SK-N-SH (cell line): ENCODE measurements at regions of chr11 and their contacts with region 1.

Region 1: DNA sequence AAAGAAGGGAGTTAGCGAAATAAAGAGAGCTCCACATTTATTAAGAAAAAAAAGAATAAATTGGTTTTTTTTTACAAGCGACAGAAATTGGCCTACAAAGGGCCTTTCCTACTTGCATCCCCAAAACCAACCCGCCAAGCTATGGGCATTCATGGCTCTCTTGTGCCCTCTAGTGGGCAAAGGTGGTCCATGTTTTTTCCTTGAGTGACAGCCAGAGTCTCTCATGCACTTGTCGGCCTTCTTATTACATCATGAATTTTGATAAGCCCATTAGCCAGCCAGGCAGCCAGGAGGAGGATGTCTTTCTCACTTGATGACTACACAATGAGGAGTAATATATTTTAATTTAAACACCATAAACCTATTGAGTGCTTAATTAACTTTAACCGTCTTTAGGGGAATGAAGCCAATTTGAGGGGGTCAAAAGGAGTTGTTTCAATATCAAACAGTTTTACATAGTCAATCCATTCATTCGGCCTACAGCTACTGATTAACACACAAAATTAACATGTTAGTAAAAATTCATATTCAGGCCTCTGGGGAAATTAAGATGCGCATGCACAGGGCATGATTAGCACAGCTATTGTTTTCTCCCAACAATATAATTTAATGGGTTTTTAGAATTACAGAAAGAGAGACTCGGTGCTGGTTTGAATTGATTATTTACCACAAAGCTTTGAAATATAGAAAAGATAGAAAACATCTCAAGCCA is 85.5 kb downstream of the RCN1 start:
- DNase-seq: peak; percentile 72
- H3K4me3 ChIP-seq: no peak overlapping the region
- H3K27ac ChIP-seq: no peak overlapping the region
- H3K4me1 ChIP-seq: peaks cover 0 to 4% of the 10 kb centered on the region in 2 experiments; a peak in 1 of 4 replicates
- H3K27me3 ChIP-seq: peaks cover 27% of the 10 kb centered on the region; the same call in 1 of the 2 replicates
- CTCF ChIP-seq: peak; percentile 88
- EP300 ChIP-seq: no peak
- RAD21 ChIP-seq: peak; percentile 97

Region 2: DNA sequence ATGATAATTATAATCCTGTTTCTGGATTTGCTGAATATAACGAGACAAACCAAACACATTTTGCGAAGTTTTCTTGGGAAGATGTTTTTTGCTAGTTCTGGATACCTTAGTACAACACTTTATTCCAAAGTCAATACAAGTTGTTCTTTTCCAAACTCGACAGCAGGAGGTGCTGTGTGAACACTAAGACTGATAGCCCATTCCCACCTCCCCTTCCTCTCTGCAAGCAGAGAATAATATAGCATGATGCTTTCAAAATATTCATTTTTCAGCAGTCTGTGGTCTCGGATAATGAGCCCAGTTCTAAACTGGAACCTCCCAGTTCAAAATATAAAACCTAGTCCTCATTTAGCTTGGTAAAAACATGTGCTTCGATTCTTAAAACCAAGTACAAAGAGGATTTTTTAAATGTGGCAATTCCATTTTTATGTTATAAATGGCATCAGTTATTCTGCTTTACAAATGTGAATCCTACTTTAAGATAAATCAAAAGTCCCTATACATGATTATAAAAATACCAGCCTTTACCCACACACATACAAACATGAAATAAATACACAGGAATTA is 936.0 kb before region 1 on chr11:
- CTCF ChIA-PET with region 1: interaction called, 11 read pairs
- POLR2A ChIA-PET with region 1: no interaction called
- DNase-seq: peak; percentile 14
- H3K4me3 ChIP-seq: no peak overlapping the region; a peak in 1 of 4 replicates
- H3K27ac ChIP-seq: no peak overlapping the region
- H3K4me1 ChIP-seq: peaks cover 0 to 14% of the 10 kb centered on the region in 2 experiments; a peak in 1 of 4 replicates
- H3K27me3 ChIP-seq: no peaks in the 10 kb centered on the region
- CTCF ChIP-seq: peak; percentile 70
- EP300 ChIP-seq: no peak
- RAD21 ChIP-seq: peak; percentile 78

Region 3: DNA sequence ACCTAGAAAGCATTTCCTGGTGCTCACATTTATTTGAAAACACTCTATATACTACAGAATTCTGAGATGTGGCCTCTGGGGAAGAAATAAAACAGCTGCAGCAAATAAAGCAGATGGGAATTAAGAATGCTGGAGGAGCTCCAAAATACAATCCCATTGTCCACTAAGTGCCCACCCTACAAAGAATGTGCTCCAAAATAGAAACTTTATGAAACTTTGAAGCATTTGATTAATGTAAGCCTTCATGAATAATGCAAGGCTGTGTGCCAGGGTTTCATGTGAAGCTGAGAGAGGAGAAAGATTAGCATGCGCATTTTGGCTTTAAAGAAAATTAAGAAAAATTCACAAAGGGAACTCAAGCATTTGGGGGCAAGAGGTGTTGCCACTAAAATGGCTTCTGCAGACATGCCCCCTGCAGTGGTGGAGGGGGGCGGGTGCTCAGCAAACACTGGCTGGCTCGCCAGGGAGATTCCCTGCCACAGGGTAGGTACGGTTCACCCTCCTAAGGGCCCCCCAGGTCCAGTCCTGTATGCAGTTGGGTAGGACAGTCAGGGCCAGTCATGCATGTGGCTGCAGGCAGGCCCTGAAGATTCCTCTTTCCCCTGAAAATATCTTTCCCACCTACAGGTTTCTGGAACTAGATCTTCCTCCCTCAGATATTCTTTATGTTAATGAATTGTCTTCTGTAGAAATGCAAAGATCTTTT is 132.1 kb before region 1 on chr11:
- CTCF ChIA-PET with region 1: interaction called, 214 read pairs
- POLR2A ChIA-PET with region 1: no interaction called
- DNase-seq: no peak
- H3K4me3 ChIP-seq: no peak overlapping the region
- H3K27ac ChIP-seq: no peak overlapping the region
- H3K4me1 ChIP-seq: peaks cover 0 to 15% of the 10 kb centered on the region in 2 experiments; a peak in 1 of 4 replicates
- H3K27me3 ChIP-seq: peaks cover 8% of the 10 kb centered on the region
- CTCF ChIP-seq: no peak
- EP300 ChIP-seq: no peak
- RAD21 ChIP-seq: no peak

Region 4: GRCh38 chr11:32065865-32066264 is 110.5 kb before region 1 on chr11:
- CTCF ChIA-PET with region 1: interaction called, 17 read pairs
- POLR2A ChIA-PET with region 1: no interaction called
- DNase-seq: no peak
- H3K4me3 ChIP-seq: no peak overlapping the region
- H3K27ac ChIP-seq: no peak overlapping the region
- H3K4me1 ChIP-seq: no peaks in the 10 kb centered on the region
- H3K27me3 ChIP-seq: peaks cover 85% of the 10 kb centered on the region
- CTCF ChIP-seq: no peak
- EP300 ChIP-seq: no peak
- RAD21 ChIP-seq: no peak

Region 5: DNA sequence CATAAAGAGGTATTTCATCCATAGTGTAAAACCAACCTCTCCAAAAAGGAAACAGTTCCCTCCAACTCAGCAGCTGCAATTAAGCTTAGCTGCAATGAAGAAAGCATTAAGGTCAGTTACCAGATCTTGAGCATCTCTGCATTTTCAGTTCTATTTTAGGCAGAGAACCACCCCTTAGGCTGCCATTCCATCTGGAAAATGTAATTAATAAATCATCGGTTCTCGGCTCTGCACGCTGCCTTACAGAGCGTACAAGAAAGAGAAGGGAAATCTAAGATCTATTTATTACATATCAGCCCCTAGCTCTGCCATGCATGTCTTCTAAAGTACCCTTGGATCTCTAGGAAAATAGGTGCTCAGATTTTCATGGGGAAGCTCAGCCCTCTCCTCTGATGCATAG is 14.0 kb before region 1 on chr11:
- CTCF ChIA-PET with region 1: interaction called, 27 read pairs
- POLR2A ChIA-PET with region 1: no interaction called
- DNase-seq: no peak
- H3K4me3 ChIP-seq: no peak overlapping the region
- H3K27ac ChIP-seq: no peak overlapping the region
- H3K4me1 ChIP-seq: no peaks in the 10 kb centered on the region
- H3K27me3 ChIP-seq: peaks cover 37% of the 10 kb centered on the region
- CTCF ChIP-seq: no peak
- EP300 ChIP-seq: no peak
- RAD21 ChIP-seq: no peak

Region 6: GRCh38 chr11:32426819-32427615 is 250.6 kb after region 1 on chr11:
- CTCF ChIA-PET with region 1: no interaction called
- POLR2A ChIA-PET with region 1: no interaction called
- DNase-seq: peak; percentile 30
- H3K4me3 ChIP-seq: no peak overlapping the region
- H3K27ac ChIP-seq: no peak overlapping the region
- H3K4me1 ChIP-seq: peaks cover 0 to 9% of the 10 kb centered on the region in 2 experiments; a peak in 1 of 4 replicates
- H3K27me3 ChIP-seq: peaks cover 64% of the 10 kb centered on the region
- CTCF ChIP-seq: no peak
- EP300 ChIP-seq: no peak
- RAD21 ChIP-seq: no peak